ENCODE measurements at regions of chr20 and their contacts with region 1.

Region 1: DNA sequence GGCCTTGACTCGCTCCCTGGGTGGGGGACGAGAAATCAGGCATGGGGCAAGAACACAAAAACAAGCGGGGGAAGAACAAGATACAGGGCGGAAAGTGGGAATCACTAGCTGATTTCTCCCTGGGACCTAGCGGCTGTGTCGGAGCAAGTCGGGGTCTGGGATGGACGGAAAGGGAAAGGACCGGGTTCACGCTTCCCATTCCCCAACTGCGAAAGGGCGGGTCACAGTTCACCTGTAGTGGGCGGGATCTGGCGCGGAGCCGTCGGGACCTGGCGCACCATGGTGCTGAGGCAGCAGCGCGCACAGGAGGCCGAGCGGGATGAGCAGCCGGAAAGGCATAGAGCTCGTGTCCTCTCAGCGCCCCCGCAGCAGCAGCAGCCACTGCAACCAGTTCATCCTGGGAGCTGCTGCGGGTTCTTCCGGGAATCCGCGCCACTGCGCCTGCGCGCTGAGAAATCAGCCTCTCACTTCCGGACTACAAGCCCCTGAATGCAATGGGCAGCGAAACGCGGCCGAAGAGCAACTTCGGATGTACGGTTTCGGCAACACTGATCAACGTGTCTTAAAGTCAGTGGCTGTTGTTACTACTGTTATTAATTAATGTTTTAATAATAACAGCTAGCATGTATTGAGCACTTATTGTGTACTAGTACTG is at the start of gene EDEM2:
- DNase-seq: peak; percentile 93
- H3K4me3 ChIP-seq: peak within 1 kb of the TSS; percentile 49 to 85 (median 82)
- H3K27ac ChIP-seq: peak within 1 kb of the TSS; percentile 81
- H3K4me1 ChIP-seq: peaks cover 24% of the 10 kb centered on the region
- H3K27me3 ChIP-seq: no peaks in the 10 kb centered on the region
- CTCF ChIP-seq: peak in 1 of 2 donors; percentile 10
- POLR2A ChIP-seq: peak; percentile 75
- total RNA-seq, gene EDEM2: 37.5 and 39.5 TPM in 2 replicates

Region 2: GRCh38 chr20:34876162-34877001 is 270.7 kb before region 1 on chr20 and contains the start of gene ACSS2:
- CTCF ChIA-PET with region 1: interaction called, 14 read pairs
- POLR2A ChIA-PET with region 1: no interaction called
- dilution Hi-C with region 1: no loop called
- intact Hi-C with region 1: no loop called
- DNase-seq: peak; percentile 99
- H3K4me3 ChIP-seq: peak within 1 kb of the TSS; percentile 72 to 89 (median 89)
- H3K27ac ChIP-seq: peak within 1 kb of the TSS; percentile 6
- H3K4me1 ChIP-seq: peaks cover 12% of the 10 kb centered on the region
- H3K27me3 ChIP-seq: no peaks in the 10 kb centered on the region
- CTCF ChIP-seq: no peak
- POLR2A ChIP-seq: peak; percentile 79
- total RNA-seq, gene ACSS2: 40.7 and 48.5 TPM in 2 replicates

Region 3: DNA sequence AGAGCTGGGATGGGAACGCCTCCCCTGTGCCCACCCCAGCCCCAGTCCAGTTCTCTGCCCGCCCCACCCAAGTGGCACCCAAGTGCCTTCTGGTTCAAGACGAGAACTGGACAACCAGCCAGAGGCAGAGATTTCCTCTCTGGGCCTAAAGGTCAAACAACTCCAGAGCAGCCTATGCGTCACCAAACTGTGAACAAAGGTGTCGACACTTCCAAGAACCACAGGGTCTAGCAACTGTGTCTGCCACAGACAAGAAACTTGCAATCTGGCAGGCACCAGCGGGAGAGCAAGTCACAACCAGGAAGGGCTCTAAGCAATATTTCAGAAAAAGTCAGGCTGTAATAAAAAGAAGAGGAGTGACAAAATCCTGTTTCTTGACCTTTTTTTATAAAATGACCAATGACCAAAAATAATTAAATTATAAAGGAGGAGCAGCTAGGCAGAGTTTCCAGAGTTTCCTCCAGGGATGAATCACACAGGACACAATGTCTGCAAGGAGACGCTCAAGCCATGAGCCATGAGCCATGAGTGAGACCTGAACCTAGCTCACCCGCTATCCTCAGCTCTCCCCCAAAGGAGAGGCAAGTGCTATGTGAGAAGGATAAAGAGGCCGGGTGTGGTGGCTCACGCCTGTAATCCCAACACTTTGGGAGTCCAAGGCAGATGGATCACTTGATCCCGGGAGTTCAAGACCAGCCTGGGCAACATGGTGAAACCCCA is 11.0 kb before region 1 on chr20:
- CTCF ChIA-PET with region 1: interaction called, 19 read pairs
- POLR2A ChIA-PET with region 1: interaction called, 3 read pairs
- dilution Hi-C with region 1: no loop called
- intact Hi-C with region 1: no loop called
- DNase-seq: peak; percentile 88
- H3K4me3 ChIP-seq: no peak overlapping the region
- H3K27ac ChIP-seq: peak overlapping the region; percentile 97
- H3K4me1 ChIP-seq: peaks cover 34% of the 10 kb centered on the region
- H3K27me3 ChIP-seq: no peaks in the 10 kb centered on the region
- CTCF ChIP-seq: no peak
- POLR2A ChIP-seq: peak; percentile 33

Region 4: GRCh38 chr20:35181731-35182130 is 34.7 kb after region 1 on chr20:
- CTCF ChIA-PET with region 1: interaction called, 82 read pairs
- POLR2A ChIA-PET with region 1: interaction called, 5 read pairs
- dilution Hi-C with region 1: no loop called
- intact Hi-C with region 1: no loop called
- DNase-seq: no peak
- H3K4me3 ChIP-seq: no peak overlapping the region
- H3K27ac ChIP-seq: no peak overlapping the region
- H3K4me1 ChIP-seq: no peaks in the 10 kb centered on the region
- H3K27me3 ChIP-seq: no peaks in the 10 kb centered on the region
- CTCF ChIP-seq: no peak
- POLR2A ChIP-seq: no peak

Region 5: DNA sequence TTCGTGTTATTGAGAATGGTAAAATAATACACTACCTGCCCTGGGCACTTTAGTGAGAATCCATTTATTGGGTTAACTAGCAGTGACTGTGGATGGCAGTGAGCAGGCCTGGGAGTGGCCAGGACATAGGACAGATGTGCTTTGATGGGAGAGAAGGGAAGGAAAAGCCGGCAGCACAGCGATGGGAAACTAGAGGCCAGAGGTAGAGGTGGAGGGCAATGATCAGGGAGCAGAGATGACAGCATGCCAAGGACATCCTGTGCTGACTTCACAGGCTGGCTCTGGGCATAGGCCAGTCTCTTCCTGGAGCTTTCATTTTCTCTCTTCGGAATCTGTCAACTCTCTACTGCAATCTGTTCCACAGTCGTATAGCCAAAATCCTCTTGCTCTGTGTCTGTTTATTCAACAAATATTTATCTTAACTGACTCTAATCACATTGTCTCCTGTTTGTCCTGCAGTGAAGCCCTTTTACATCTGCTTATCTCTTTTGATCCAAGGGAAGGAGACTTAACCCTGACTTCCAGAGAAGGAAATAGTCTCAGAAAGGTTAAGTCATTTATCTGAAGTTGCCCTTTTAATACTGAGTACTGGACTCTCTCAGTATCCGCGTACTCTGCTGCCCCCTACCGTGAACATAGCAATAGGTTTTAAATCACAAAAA is 61.0 kb after region 1 on chr20:
- CTCF ChIA-PET with region 1: interaction called, 294 read pairs
- POLR2A ChIA-PET with region 1: interaction called, 4 read pairs
- dilution Hi-C with region 1: no loop called
- intact Hi-C with region 1: loop called (anchors 1 kb)
- DNase-seq: peak; percentile 92
- H3K4me3 ChIP-seq: peak overlapping the region in 1 of 3 experiments; percentile 42
- H3K27ac ChIP-seq: peak overlapping the region; percentile 53
- H3K4me1 ChIP-seq: peaks cover 6% of the 10 kb centered on the region
- H3K27me3 ChIP-seq: no peaks in the 10 kb centered on the region
- CTCF ChIP-seq: peak; percentile 62 to 66
- POLR2A ChIP-seq: peak; percentile 16

Region 6: GRCh38 chr20:35257175-35257909 is 110.3 kb after region 1 on chr20:
- CTCF ChIA-PET with region 1: interaction called, 11 read pairs
- POLR2A ChIA-PET with region 1: no interaction called
- dilution Hi-C with region 1: no loop called
- intact Hi-C with region 1: no loop called
- DNase-seq: peak; percentile 63
- H3K4me3 ChIP-seq: no peak overlapping the region
- H3K27ac ChIP-seq: no peak overlapping the region
- H3K4me1 ChIP-seq: peaks cover 9% of the 10 kb centered on the region
- H3K27me3 ChIP-seq: peaks cover 0 to 2% of the 10 kb centered on the region in 2 experiments
- CTCF ChIP-seq: no peak
- POLR2A ChIP-seq: no peak

Region 7: DNA sequence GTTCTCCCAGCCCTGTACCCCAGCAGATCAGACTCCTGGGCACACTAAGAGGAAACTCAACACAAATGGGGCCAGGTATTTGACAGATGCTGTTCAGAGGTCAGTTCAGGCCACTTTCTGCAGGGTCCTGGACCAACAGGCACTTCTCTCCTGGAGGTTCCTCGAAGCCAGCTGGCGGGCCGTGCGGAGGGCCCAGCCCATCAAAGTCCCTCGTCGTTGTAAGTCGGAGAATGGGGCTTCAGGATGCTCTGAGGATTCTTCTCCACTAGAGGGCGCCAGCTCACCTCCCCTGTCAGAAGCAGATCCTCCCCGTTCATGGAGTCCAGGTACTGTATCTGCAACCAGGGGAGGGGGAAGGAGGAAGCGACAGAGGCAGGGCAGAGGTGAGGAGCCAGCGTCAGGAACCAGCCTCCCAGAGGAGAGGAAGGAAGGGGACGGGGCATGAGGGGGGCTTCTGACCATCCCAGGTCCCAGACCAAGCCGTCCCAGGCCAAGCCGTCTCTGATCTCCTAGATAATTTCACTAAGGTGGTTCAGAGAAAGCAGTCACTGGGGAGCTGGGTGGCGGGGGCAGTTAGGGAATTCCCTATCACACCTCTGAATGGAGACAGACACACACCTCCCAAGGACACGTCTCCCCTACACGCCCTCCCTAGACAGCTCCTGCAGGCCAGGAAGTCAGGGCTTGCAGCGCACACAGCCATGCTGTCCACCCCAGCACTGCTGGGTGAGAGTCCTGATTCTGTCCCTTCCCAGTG is 156.9 kb after region 1 on chr20:
- CTCF ChIA-PET with region 1: interaction called, 10 read pairs
- POLR2A ChIA-PET with region 1: no interaction called
- dilution Hi-C with region 1: no loop called
- intact Hi-C with region 1: no loop called
- DNase-seq: peak; percentile 87
- H3K4me3 ChIP-seq: no peak overlapping the region
- H3K27ac ChIP-seq: peak overlapping the region; percentile 82
- H3K4me1 ChIP-seq: peaks cover 67% of the 10 kb centered on the region
- H3K27me3 ChIP-seq: no peaks in the 10 kb centered on the region
- CTCF ChIP-seq: peak; percentile 93 to 95
- POLR2A ChIP-seq: no peak